ENCODE measurements at regions of chr6 and their contacts with region 1.

Region 1: DNA sequence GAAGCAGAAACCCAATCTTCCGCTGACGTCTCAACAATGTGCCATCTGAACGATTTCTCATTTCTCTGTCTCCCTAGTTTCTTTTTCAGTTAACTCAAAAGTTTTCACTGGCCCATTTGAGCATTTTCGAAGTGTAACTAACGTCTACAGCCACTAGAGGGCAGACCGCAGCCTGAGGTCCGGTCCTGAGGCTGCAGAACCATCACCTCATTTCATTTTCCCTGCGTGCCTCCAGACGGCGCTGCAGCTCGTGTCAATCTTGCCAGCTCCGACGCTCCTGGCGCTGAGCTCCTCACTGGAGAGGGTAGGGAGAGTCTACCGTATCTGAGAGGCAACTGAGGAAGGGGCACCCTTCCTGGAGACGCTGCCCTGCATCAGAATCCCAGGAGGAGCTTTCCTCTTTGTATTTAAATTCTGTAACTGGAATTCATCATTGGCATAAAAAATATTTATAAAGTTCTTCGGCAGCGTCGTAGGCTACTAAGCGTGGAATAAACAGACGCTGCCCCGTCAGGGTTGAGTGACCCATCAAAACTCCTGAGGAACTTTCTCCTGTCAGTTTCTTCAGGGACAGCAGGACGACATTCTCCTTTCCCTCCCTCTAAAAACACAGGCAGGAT is 28.5 kb upstream of the DTNBP1 start:
- DNase-seq: peak; percentile 74
- ATAC-seq: peak; percentile 98
- H3K4me3 ChIP-seq: no peak overlapping the region
- H3K27ac ChIP-seq: no peak overlapping the region
- H3K4me1 ChIP-seq: no peaks in the 10 kb centered on the region; the same call in 1 of the 2 replicates
- H3K27me3 ChIP-seq: no peaks in the 10 kb centered on the region
- CTCF ChIP-seq: peak; percentile 100; a peak in 5 of 6 replicates
- EP300 ChIP-seq: 0 out of 4 replicates have a peak, but pooled peaks of 1 of the 2 experiments have one; percentile 8
- POLR2A ChIP-seq: no peak
- RAD21 ChIP-seq: peak; percentile 100

Region 2: GRCh38 chr6:15715060-15715459 is 23.7 kb after region 1 on chr6:
- CTCF ChIA-PET with region 1: no interaction called
- POLR2A ChIA-PET with region 1: no interaction called
- RAD21 ChIA-PET with region 1: no interaction called
- SMC1A ChIA-PET with region 1: no interaction called
- in situ Hi-C with region 1: no loop called
- intact Hi-C with region 1: no loop called
- DNase-seq: no peak
- ATAC-seq: no peak
- H3K4me3 ChIP-seq: no peak overlapping the region
- H3K27ac ChIP-seq: no peak overlapping the region
- H3K4me1 ChIP-seq: no peaks in the 10 kb centered on the region
- H3K27me3 ChIP-seq: no peaks in the 10 kb centered on the region
- CTCF ChIP-seq: no peak
- EP300 ChIP-seq: no peak
- POLR2A ChIP-seq: no peak
- RAD21 ChIP-seq: no peak

Region 3: DNA sequence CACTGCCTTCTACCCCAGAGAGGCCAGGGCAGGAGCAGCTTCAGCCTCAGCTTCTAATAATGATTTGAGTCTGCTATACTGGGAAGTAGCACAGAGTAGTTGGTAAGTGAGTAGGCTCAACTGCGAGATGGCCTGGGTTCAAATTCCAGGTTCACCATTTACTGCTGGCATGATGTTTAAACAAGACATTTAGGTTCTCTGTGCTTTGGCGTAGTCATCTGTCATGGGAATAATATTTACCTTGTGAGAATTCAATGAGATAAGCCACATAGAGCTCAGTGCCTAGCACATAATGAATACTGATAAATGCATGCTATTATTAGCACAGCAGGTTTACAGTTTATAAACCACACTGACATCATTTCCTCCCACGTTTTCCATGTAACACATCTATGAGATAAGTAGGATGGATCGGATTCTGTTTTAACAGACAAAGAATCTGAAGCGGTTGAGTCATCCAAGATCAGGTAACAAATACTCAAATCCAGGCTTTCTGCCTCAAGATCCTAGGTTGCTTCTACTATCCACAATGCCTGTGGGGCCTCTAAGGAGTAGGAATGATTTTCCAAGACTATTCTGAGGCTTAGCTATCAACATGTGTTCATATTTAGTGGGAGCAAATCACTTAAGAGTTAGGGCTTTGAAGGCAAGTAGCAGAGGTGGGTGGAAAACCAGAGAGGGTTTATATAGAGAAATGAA is 44.4 kb after region 1 on chr6:
- CTCF ChIA-PET with region 1: interaction called, 10 read pairs
- POLR2A ChIA-PET with region 1: no interaction called
- RAD21 ChIA-PET with region 1: interaction called, 35 read pairs
- SMC1A ChIA-PET with region 1: interaction called, 72 read pairs
- in situ Hi-C with region 1: no loop called
- intact Hi-C with region 1: no loop called
- DNase-seq: no peak
- ATAC-seq: peak; percentile 74
- H3K4me3 ChIP-seq: no peak overlapping the region
- H3K27ac ChIP-seq: no peak overlapping the region
- H3K4me1 ChIP-seq: peaks cover 4% of the 10 kb centered on the region; the same call in 1 of the 2 replicates
- H3K27me3 ChIP-seq: no peaks in the 10 kb centered on the region
- CTCF ChIP-seq: no peak
- EP300 ChIP-seq: peak; percentile 60 to 74; a peak in 3 of 4 replicates
- POLR2A ChIP-seq: no peak
- RAD21 ChIP-seq: no peak

Region 4: GRCh38 chr6:15776458-15776980 is 85.2 kb after region 1 on chr6:
- CTCF ChIA-PET with region 1: interaction called, 26 read pairs
- POLR2A ChIA-PET with region 1: interaction called, 3 read pairs
- RAD21 ChIA-PET with region 1: interaction called, 17 read pairs
- SMC1A ChIA-PET with region 1: interaction called, 20 read pairs
- in situ Hi-C with region 1: no loop called
- intact Hi-C with region 1: no loop called
- DNase-seq: peak; percentile 55
- ATAC-seq: peak; percentile 89
- H3K4me3 ChIP-seq: no peak overlapping the region
- H3K27ac ChIP-seq: no peak overlapping the region
- H3K4me1 ChIP-seq: peaks cover 7% of the 10 kb centered on the region
- H3K27me3 ChIP-seq: no peaks in the 10 kb centered on the region
- CTCF ChIP-seq: no peak
- EP300 ChIP-seq: peak; percentile 85 to 89; a peak in 2 of 4 replicates
- POLR2A ChIP-seq: no peak
- RAD21 ChIP-seq: 0 out of 2 replicates have a peak, but pooled peaks have one; percentile 16

Region 5: GRCh38 chr6:15879382-15880261 is 188.3 kb after region 1 on chr6:
- CTCF ChIA-PET with region 1: interaction called, 9 read pairs
- POLR2A ChIA-PET with region 1: no interaction called
- RAD21 ChIA-PET with region 1: interaction called, 20 read pairs
- SMC1A ChIA-PET with region 1: interaction called, 20 read pairs
- in situ Hi-C with region 1: no loop called
- intact Hi-C with region 1: loop called (anchors 5 kb)
- DNase-seq: no peak
- ATAC-seq: peak; percentile 81
- H3K4me3 ChIP-seq: no peak overlapping the region
- H3K27ac ChIP-seq: peak overlapping the region; percentile 61
- H3K4me1 ChIP-seq: peaks cover 18% of the 10 kb centered on the region
- H3K27me3 ChIP-seq: no peaks in the 10 kb centered on the region
- CTCF ChIP-seq: no peak
- EP300 ChIP-seq: 0 out of 4 replicates have a peak, but pooled peaks of 1 of the 2 experiments have one; percentile 25
- POLR2A ChIP-seq: no peak
- RAD21 ChIP-seq: no peak

Region 6: DNA sequence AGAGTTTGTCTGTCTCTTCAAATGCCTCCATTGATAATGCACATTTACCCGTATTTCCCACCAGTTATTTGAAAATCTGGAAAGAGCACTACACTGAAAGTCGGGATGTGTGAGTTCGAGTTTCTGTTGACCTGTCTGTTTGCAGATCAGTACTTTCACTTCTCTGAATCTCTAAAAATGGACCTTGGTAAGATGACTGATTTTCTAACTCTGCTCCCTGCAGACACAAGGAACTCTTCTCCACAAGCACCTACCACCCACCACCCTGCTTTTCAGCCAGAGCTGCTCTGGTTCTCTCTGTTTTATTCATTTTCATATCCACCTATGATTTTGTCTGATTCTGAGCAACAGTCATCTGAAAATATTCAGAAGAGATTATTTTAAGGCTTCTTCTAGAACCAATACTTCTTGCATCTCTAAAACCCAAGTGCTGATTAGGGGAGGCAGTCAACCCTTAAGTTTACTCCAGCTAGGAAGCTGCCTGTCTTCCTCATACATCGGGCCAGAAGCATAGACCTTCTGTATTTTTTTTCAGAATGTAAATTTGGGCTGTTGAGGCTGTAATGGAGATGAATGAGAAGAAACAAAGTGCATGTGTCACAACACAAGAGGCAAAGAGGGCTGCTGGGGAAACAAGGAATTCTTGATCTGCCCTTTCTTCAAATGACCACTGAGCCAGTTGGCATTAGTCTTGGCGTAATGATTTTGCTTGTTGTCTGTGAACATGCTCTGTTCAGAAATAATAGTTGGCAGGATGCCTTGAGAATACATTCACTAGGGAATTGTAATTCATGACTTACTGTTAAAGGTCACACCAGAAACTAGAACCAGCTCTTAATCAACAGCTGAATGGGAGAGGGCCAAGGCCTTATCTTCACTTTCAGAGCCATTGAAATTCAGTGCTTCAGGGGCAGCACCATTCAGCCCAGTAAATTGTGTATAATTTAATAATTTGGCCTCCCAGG is 352.1 kb after region 1 on chr6:
- CTCF ChIA-PET with region 1: no interaction called
- POLR2A ChIA-PET with region 1: no interaction called
- RAD21 ChIA-PET with region 1: no interaction called
- SMC1A ChIA-PET with region 1: interaction called, 5 read pairs
- in situ Hi-C with region 1: no loop called
- intact Hi-C with region 1: loop called (anchors 5 kb)
- DNase-seq: peak; percentile 62
- ATAC-seq: peak; percentile 91
- H3K4me3 ChIP-seq: no peak overlapping the region
- H3K27ac ChIP-seq: peak overlapping the region; percentile 59
- H3K4me1 ChIP-seq: peaks cover 29% of the 10 kb centered on the region
- H3K27me3 ChIP-seq: no peaks in the 10 kb centered on the region
- CTCF ChIP-seq: no peak
- EP300 ChIP-seq: peak; percentile 27 to 58; a peak in 2 of 4 replicates
- POLR2A ChIP-seq: no peak
- RAD21 ChIP-seq: no peak

Region 7: GRCh38 chr6:16058216-16059075 is 367.1 kb after region 1 on chr6:
- CTCF ChIA-PET with region 1: no interaction called
- POLR2A ChIA-PET with region 1: no interaction called
- RAD21 ChIA-PET with region 1: no interaction called
- SMC1A ChIA-PET with region 1: no interaction called
- in situ Hi-C with region 1: no loop called
- intact Hi-C with region 1: no loop called
- DNase-seq: no peak
- ATAC-seq: no peak
- H3K4me3 ChIP-seq: no peak overlapping the region
- H3K27ac ChIP-seq: no peak overlapping the region
- H3K4me1 ChIP-seq: no peaks in the 10 kb centered on the region
- H3K27me3 ChIP-seq: no peaks in the 10 kb centered on the region
- CTCF ChIP-seq: no peak
- EP300 ChIP-seq: no peak
- POLR2A ChIP-seq: no peak
- RAD21 ChIP-seq: no peak

Region 8: GRCh38 chr6:16183187-16183664 is 491.9 kb after region 1 on chr6:
- CTCF ChIA-PET with region 1: interaction called, 92 read pairs
- POLR2A ChIA-PET with region 1: interaction called, 8 read pairs
- RAD21 ChIA-PET with region 1: interaction called, 129 read pairs
- SMC1A ChIA-PET with region 1: interaction called, 56 read pairs
- in situ Hi-C with region 1: loop called (anchors 5 kb)
- intact Hi-C with region 1: loop called (anchors 1 kb)
- DNase-seq: peak; percentile 35
- ATAC-seq: peak; percentile 65
- H3K4me3 ChIP-seq: no peak overlapping the region
- H3K27ac ChIP-seq: no peak overlapping the region
- H3K4me1 ChIP-seq: no peaks in the 10 kb centered on the region
- H3K27me3 ChIP-seq: no peaks in the 10 kb centered on the region; a peak in 1 of 4 replicates
- CTCF ChIP-seq: peak; percentile 61 to 79 (median 63)
- EP300 ChIP-seq: no peak
- POLR2A ChIP-seq: no peak
- RAD21 ChIP-seq: peak; percentile 78

Measured in GM12878 (cell line).